ENCODE measurements at regions of chr2 and their contacts with region 1.

Region 1: DNA sequence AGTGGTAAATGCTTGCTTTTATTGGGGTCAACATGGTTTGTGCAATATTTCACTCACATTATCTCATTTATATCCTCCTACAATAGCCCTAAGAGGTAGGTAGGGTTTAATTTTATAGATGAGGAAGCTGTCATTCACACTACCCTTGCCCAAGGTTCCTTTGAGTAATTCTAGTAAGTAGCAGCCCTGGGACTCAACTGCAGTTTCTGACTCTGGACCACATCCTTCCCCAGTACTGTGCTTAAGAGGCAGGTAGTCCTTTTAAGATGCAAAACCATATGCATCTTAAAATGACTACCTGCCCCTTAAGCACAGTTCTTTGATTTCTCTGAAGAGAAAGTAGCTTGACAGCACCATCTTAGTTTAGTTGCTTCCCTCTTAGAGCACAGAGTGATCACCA is 15.7 kb upstream of the NT5C1B start:
- DNase-seq: peak; percentile 4
- H3K4me3 Mint-ChIP-seq: no peak overlapping the region
- H3K27ac Mint-ChIP-seq: peak overlapping the region; percentile 60
- H3K4me1 Mint-ChIP-seq: peaks cover 11% of the 10 kb centered on the region
- H3K27me3 Mint-ChIP-seq: no peaks in the 10 kb centered on the region

Region 2: GRCh38 chr2:18540872-18541271 is 64.2 kb before region 1 on chr2:
- intact Hi-C with region 1: loop called (anchors 2 kb)
- DNase-seq: no peak
- H3K4me3 Mint-ChIP-seq: no peak overlapping the region
- H3K27ac Mint-ChIP-seq: no peak overlapping the region
- H3K4me1 Mint-ChIP-seq: peaks cover 14% of the 10 kb centered on the region
- H3K27me3 Mint-ChIP-seq: peaks cover 2% of the 10 kb centered on the region

Region 3: DNA sequence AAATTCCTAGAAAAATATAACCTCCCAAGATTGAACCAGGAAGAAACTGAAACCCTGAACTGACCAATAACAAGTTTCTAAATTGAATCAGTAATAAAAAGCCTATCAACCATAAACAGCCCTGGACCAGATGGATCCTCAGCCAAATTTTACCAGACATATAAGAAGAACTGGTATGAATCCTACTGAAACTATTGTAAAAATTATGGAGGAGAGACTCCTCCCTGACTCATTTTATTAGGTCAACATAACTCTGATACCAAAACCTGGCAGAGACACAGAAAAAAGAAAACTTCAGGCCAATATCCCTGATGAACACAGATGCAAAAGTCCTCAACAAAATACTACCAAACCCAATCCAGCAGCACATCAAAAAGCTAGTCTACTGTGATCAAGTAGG is 27.1 kb before region 1 on chr2:
- intact Hi-C with region 1: no loop called
- DNase-seq: no peak
- H3K4me3 Mint-ChIP-seq: no peak overlapping the region
- H3K27ac Mint-ChIP-seq: no peak overlapping the region
- H3K4me1 Mint-ChIP-seq: no peaks in the 10 kb centered on the region
- H3K27me3 Mint-ChIP-seq: no peaks in the 10 kb centered on the region